Activated CD4-positive, alpha-beta T cell treated with anti-CD3 and anti-CD28 coated beads for 36 hours (primary cell): ENCODE measurements at regions of chr6 and their contacts with region 1.

Region 1: DNA sequence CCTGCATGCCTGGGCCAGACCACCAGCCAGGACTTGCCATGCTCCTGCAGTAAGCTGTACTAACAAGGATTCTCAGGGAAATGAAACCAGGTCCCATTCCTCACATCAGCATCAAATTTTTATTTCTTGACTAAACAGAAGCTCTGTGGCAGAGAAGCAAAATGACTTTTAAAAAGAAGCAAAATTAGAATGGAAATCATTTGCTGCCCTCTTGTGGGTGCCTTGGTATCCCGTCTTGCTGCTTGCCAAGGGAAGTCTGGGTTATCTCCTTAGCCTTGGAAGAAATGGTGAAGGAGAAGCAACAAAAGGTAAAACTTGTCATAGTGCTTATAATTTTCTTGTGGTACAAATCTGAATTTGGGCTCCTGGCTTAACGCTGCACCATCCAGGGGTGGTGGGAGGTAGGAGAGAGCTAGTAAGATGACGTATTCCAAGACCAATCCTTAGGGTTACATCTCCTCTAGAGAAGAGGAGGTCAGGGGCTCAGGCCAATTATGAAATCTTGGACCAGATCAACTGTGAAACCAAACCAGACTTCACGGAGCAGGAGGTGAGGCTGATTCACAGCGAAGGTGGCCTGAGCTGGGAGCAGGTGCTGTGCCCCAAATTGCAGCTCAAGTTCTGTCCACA is 107.5 kb downstream of the FAXC start:
- DNase-seq: peak; percentile 15
- ATAC-seq: no peak
- H3K4me3 Mint-ChIP-seq: no peak overlapping the region
- H3K27ac Mint-ChIP-seq: no peak overlapping the region
- H3K4me1 Mint-ChIP-seq: no peaks in the 10 kb centered on the region
- H3K27me3 Mint-ChIP-seq: peaks cover 8% of the 10 kb centered on the region

Region 2: DNA sequence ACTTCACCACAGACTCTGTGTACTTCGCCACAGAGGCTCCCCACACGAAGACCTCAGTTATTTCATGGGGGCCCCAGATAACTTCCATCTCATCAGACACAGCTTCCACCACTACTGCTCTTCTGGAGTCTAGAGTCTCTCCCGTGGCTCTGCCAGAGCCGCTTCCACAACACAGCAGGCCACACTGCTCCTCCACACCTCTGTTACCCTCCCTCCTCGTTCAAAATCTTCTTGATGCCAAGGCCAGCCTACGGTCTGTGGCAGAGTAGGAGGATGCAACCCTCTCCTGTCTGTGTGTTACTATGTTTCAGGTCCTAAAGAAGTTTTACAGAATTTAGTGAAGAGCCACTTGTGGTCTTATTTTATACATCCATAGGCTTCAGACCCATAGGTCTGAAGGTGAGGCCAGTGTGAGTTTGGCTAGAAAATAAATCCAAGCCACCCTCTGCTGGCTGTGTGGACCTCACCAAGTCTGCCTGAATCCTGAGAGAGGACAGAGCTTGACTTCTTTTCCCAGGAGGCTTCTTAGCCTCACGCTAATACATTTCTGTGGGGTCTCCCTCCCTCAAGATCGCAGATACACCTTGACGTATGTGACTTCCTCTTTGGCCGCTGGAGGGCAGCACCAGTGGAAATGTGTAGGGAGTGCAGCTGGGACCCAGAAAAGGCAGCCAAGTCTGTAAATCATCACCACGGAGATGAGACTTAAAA is 90.2 kb before region 1 on chr6:
- CTCF ChIA-PET with region 1: interaction called, 14 read pairs
- POLR2A ChIA-PET with region 1: no interaction called
- intact Hi-C with region 1: loop called in 1 of 2 experiments (anchors 1 kb)
- DNase-seq: peak; percentile 73
- ATAC-seq: peak; percentile 79
- H3K4me3 Mint-ChIP-seq: no peak overlapping the region
- H3K27ac Mint-ChIP-seq: no peak overlapping the region
- H3K4me1 Mint-ChIP-seq: no peaks in the 10 kb centered on the region
- H3K27me3 Mint-ChIP-seq: peaks cover 3% of the 10 kb centered on the region

Region 3: GRCh38 chr6:99416892-99417767 is 175.1 kb after region 1 on chr6:
- CTCF ChIA-PET with region 1: no interaction called
- POLR2A ChIA-PET with region 1: no interaction called
- intact Hi-C with region 1: no loop called
- DNase-seq: no peak
- ATAC-seq: peak; percentile 65
- H3K4me3 Mint-ChIP-seq: no peak overlapping the region
- H3K27ac Mint-ChIP-seq: peak overlapping the region; percentile 60
- H3K4me1 Mint-ChIP-seq: peaks cover 58% of the 10 kb centered on the region
- H3K27me3 Mint-ChIP-seq: no peaks in the 10 kb centered on the region

Region 4: DNA sequence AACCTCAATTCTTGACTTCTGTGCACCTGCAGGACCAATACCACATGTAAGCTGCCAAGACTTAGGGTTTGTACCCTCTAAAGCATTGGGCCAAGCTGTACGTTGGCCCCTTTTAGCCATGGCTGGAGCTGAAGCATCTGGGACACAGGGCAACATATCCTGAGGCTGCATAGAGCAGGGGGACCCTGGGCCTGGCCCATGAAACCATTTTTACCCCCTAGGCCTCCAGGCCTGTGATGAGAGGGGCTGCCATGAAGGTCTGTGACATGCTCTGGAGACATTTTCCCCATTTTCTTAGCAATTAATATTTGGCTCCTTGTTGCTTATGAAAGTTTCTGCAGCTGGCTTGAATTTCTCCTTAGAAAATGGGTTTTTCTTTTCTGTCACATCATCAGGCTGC is 395.6 kb after region 1 on chr6:
- CTCF ChIA-PET with region 1: no interaction called
- POLR2A ChIA-PET with region 1: no interaction called
- intact Hi-C with region 1: no loop called
- DNase-seq: no peak
- ATAC-seq: no peak
- H3K4me3 Mint-ChIP-seq: no peak overlapping the region
- H3K27ac Mint-ChIP-seq: no peak overlapping the region
- H3K4me1 Mint-ChIP-seq: no peaks in the 10 kb centered on the region
- H3K27me3 Mint-ChIP-seq: peaks cover 24% of the 10 kb centered on the region